CD8-positive, alpha-beta T cell (primary cell): ENCODE measurements at regions of chr15 and their contacts with region 1.

Region 1: GRCh38 chr15:78437762-78438302 is at the start of gene IREB2:
- DNase-seq: peak; percentile 95 to 99 (median 97)
- ATAC-seq: peak; percentile 91
- H3K4me3 ChIP-seq: peak within 1 kb of the TSS; percentile 83 to 98
- H3K4me3 Mint-ChIP-seq: peak within 1 kb of the TSS; percentile 98
- H3K27ac ChIP-seq: peak within 1 kb of the TSS; percentile 95 to 96
- H3K27ac Mint-ChIP-seq: peak within 1 kb of the TSS; percentile 98
- H3K4me1 ChIP-seq: peaks cover 41% of the 10 kb centered on the region
- H3K4me1 Mint-ChIP-seq: peaks cover 47% of the 10 kb centered on the region
- H3K27me3 ChIP-seq: no peaks in the 10 kb centered on the region
- H3K27me3 Mint-ChIP-seq: no peaks in the 10 kb centered on the region
- CTCF ChIP-seq: no peak
- total RNA-seq, gene IREB2: 67.4 to 76.7 TPM

Region 2: GRCh38 chr15:78149068-78149804 is 288.6 kb before region 1 on chr15 and contains the start of gene IDH3A:
- CTCF ChIA-PET with region 1: no interaction called
- POLR2A ChIA-PET with region 1: no interaction called
- intact Hi-C with region 1: loop called (anchors 1 kb)
- DNase-seq: peak; percentile 99 to 100 (median 100)
- ATAC-seq: peak; percentile 97
- H3K4me3 ChIP-seq: peak within 1 kb of the TSS; percentile 72 to 81
- H3K4me3 Mint-ChIP-seq: peak within 1 kb of the TSS; percentile 91
- H3K27ac ChIP-seq: peak within 1 kb of the TSS; percentile 65 to 67
- H3K27ac Mint-ChIP-seq: peak within 1 kb of the TSS; percentile 91
- H3K4me1 ChIP-seq: peaks cover 18% of the 10 kb centered on the region
- H3K4me1 Mint-ChIP-seq: peaks cover 44% of the 10 kb centered on the region
- H3K27me3 ChIP-seq: no peaks in the 10 kb centered on the region
- H3K27me3 Mint-ChIP-seq: no peaks in the 10 kb centered on the region
- CTCF ChIP-seq: no peak
- total RNA-seq, gene IDH3A: 54.4 to 61.0 TPM

Region 3: DNA sequence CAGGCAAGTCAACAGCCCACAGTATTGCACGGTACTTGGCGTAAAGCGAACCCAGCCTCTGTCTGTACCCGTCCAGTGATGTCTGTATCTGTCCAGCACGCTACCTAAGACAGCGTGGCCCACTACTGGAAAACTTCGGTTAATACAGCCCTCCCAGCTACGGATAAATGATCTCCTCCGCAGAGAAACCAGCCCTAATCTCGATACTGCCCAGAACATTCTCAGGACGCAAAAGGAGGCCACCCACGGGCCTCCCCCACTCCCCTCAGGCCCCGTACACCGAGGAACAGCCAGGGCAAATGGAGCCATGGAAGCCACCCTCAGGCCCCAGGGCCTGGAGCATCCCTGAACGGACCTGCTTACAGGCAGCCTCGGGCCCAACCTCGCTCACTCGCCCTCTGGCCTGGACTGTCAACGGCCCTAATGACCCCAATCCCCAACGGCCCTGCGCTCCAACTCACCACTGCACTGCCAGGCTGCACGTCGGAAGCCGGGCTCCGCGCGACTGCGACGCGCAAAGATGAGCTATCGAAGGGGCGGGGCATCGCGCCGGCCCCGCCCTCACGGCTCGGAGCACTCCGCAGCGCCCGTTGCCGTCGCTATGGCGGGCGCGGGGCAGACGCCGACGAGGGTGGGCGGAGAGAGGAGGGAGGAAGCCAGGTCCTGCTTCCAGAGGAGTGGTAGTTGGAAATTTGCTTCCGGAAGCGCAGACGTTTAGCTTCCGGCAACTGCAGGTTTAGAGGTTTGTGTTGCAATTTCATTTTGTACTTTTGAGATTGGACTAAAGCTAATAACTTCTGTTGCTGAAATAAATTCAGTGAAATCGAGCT is 138.5 kb before region 1 on chr15 and contains the start of gene SKIC8:
- CTCF ChIA-PET with region 1: no interaction called
- POLR2A ChIA-PET with region 1: interaction called, 9 read pairs
- intact Hi-C with region 1: loop called (anchors 1 kb)
- DNase-seq: peak; percentile 80 to 95 (median 89)
- ATAC-seq: peak; percentile 98
- H3K4me3 ChIP-seq: peak within 1 kb of the TSS; percentile 89 to 99
- H3K4me3 Mint-ChIP-seq: peak within 1 kb of the TSS; percentile 98
- H3K27ac ChIP-seq: peak within 1 kb of the TSS; percentile 73 to 84
- H3K27ac Mint-ChIP-seq: peak within 1 kb of the TSS; percentile 96
- H3K4me1 ChIP-seq: peaks cover 12% of the 10 kb centered on the region
- H3K4me1 Mint-ChIP-seq: peaks cover 34% of the 10 kb centered on the region
- H3K27me3 ChIP-seq: no peaks in the 10 kb centered on the region
- H3K27me3 Mint-ChIP-seq: no peaks in the 10 kb centered on the region
- CTCF ChIP-seq: no peak
- total RNA-seq, gene SKIC8: 18.4 to 21.2 TPM

Region 4: DNA sequence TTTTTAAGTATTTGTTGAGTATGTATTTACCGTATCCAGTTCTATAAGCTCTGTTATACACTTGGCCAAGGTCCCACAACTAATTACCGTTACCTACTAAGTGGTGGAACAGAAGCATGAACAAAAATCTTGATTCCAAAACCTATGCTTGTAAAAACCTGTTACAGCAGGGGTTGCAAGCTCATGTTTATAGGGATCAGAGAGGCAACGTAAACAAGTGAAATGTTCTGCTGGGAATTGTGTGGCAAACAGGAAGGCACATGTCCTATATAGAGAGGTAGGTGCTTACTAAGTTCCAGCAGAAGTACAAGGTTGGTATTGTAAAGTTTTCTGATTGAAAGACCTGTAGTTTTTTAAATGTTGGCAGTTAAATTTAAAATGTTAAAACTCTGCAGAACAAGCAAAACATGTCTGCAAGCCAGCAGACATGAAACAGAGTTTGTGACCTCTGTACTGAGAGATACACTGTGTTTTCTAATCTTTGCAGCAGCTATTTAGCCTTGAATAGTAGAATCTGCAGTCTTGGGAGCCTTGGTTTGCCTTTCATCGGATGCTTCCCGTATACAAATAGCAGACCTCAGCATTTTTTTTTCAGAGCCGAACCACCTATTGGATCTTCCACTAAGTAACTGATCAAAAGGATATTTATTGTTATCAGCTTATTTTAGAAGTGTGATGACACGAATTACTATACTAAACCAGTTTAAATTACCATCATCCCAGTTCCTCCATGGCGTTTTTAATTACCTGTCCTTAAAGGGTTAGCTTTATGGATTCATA is 11.6 kb after region 1 on chr15:
- CTCF ChIA-PET with region 1: no interaction called
- POLR2A ChIA-PET with region 1: interaction called, 13 read pairs
- intact Hi-C with region 1: no loop called
- DNase-seq: no peak
- ATAC-seq: no peak
- H3K4me3 ChIP-seq: no peak overlapping the region
- H3K4me3 Mint-ChIP-seq: no peak overlapping the region
- H3K27ac ChIP-seq: no peak overlapping the region
- H3K27ac Mint-ChIP-seq: no peak overlapping the region
- H3K4me1 ChIP-seq: peaks cover 33% of the 10 kb centered on the region
- H3K4me1 Mint-ChIP-seq: peaks cover 67% of the 10 kb centered on the region
- H3K27me3 ChIP-seq: no peaks in the 10 kb centered on the region
- H3K27me3 Mint-ChIP-seq: no peaks in the 10 kb centered on the region
- CTCF ChIP-seq: no peak

Region 5: DNA sequence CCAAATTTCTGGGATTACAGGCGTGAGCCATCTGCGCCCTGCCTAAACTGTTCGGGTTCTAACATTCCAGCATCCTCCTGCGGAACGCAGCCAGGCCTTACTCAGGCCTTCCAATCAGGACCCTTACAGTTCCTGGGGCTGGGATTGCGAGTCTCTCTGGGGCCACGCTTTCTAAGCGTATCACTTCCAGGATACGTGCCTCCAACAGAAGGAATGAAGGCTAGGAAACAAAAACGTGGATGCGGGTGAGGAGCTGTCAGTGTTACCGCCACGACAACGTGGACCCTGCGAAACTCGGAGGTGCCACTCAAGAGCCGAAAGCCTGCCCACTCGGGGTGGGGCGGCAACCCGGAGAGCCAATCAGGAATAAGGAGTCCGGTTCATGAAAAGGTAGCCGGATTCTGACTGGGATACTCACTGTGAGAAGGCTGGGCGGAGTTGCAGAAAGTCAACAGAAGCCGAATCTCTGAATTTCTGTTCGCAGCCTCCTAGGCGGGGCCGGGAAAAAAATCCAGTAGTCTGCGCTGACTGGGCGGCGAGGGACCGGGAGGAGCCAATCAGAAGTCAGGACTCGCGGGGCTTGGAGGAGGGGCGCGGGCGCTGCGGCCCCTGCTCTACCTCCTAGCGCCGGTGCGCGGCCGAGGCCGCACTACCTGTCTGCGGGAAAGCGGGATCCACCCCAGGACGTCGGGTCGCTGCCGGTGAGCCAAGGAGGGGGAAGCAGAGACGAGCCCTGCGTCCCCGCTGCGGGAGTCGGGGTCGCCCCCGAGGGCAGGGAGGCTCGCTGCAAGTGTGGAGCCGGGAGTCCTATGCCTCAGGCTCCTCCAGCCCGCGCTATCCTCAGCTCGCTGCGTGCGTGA is 69.4 kb after region 1 on chr15 and contains the start of gene HYKK:
- CTCF ChIA-PET with region 1: no interaction called
- POLR2A ChIA-PET with region 1: interaction called, 3 read pairs
- intact Hi-C with region 1: loop called in 1 of 2 experiments (anchors 1 kb)
- DNase-seq: peak; percentile 18 to 82 (median 69)
- ATAC-seq: peak; percentile 89
- H3K4me3 ChIP-seq: peak within 1 kb of the TSS; percentile 60 to 70
- H3K4me3 Mint-ChIP-seq: peak within 1 kb of the TSS; percentile 88
- H3K27ac ChIP-seq: no peak within 1 kb of the TSS
- H3K27ac Mint-ChIP-seq: peak within 1 kb of the TSS; percentile 55
- H3K4me1 ChIP-seq: peaks cover 15% of the 10 kb centered on the region
- H3K4me1 Mint-ChIP-seq: peaks cover 29% of the 10 kb centered on the region
- H3K27me3 ChIP-seq: peaks cover 0 to 3% of the 10 kb centered on the region in 2 experiments
- H3K27me3 Mint-ChIP-seq: no peaks in the 10 kb centered on the region
- CTCF ChIP-seq: no peak
- total RNA-seq, gene HYKK: 1.6 to 2.3 TPM

Region 6: DNA sequence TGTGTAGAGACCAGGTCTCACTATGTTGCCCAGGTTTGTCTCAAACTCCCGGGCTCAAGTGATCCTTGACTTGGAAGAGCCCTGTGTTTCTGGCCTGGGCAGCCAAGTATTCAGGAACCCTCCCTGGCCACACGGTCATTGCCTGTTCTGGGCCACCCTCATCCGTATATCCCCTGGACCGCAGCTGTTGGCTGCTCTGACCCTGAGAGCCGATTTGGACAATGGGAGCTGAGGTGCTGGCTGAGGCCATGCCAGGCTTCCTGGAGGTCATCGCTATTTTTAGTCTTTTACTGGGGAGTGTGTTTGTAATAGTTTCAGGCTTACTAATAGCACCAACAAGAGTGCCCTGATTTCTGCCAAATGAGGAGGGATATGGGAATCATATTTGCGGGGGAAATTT is 312.7 kb after region 1 on chr15:
- CTCF ChIA-PET with region 1: no interaction called
- POLR2A ChIA-PET with region 1: no interaction called
- intact Hi-C with region 1: loop called in 1 of 2 experiments (anchors 5 kb)
- DNase-seq: no peak
- ATAC-seq: no peak
- H3K4me3 ChIP-seq: no peak overlapping the region
- H3K4me3 Mint-ChIP-seq: peak overlapping the region; percentile 19
- H3K27ac ChIP-seq: no peak overlapping the region
- H3K27ac Mint-ChIP-seq: no peak overlapping the region
- H3K4me1 ChIP-seq: peaks cover 8% of the 10 kb centered on the region
- H3K4me1 Mint-ChIP-seq: peaks cover 4% of the 10 kb centered on the region
- H3K27me3 ChIP-seq: no peaks in the 10 kb centered on the region
- H3K27me3 Mint-ChIP-seq: no peaks in the 10 kb centered on the region
- CTCF ChIP-seq: no peak

Region 7: DNA sequence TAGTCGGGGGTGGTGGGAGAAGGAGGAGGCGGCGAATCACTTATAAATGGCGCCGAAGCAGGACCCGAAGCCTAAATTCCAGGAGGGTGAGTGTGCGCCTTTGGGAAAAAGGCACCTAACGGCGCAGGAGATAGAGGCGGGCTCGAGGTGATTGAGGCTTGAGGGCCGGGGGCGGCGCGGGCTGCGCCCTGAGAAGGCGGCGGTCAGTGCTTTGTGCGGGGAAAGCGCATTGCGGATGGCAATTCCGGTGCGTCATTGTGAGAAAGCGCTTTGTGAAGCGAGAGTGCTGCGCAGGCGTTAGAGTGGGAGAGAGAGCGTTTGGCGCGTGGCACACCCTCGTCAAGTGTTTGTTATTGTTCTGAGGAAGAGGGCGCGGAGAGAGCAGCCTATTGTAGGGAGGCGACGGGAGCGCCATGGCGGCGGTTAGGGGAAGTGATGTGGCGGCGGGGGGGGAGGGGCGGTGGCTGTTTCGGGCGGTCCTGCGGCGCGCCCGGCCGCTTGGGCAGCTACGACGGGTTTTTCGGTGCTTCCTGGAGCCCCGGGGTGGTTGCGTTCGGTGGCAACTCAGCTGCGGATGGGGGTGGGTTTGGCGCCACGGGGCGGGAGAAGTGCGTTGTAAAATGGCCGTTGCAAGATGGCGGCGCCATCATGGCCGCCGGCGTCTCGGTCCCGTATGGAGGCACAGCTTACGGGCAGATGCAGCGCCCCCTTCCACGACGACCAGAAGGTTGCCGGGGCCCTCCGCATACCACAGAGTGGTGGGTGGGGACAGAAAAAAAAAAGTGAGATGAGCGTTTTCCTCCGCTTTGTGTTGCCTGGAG is 435.4 kb after region 1 on chr15:
- CTCF ChIA-PET with region 1: no interaction called
- POLR2A ChIA-PET with region 1: interaction called, 4 read pairs
- intact Hi-C with region 1: loop called in 1 of 2 experiments (anchors 1 kb)
- DNase-seq: peak; percentile 73 to 97 (median 88)
- ATAC-seq: peak; percentile 63
- H3K4me3 ChIP-seq: peak overlapping the region; percentile 97 to 100
- H3K4me3 Mint-ChIP-seq: peak overlapping the region; percentile 97
- H3K27ac ChIP-seq: peak overlapping the region; percentile 100
- H3K27ac Mint-ChIP-seq: peak overlapping the region; percentile 99
- H3K4me1 ChIP-seq: peaks cover 37% of the 10 kb centered on the region
- H3K4me1 Mint-ChIP-seq: peaks cover 40% of the 10 kb centered on the region
- H3K27me3 ChIP-seq: no peaks in the 10 kb centered on the region
- H3K27me3 Mint-ChIP-seq: no peaks in the 10 kb centered on the region
- CTCF ChIP-seq: peak; percentile 28